Activated CD8-positive, alpha-beta T cell treated with anti-CD3 and anti-CD28 coated beads for 36 hours (primary cell): ENCODE measurements at regions of chr2 and their contacts with region 1.

Region 1: GRCh38 chr2:96856776-96857673 is 791 bp downstream of the ANKRD39 start:
- DNase-seq: peak; percentile 59
- ATAC-seq: no peak
- H3K4me3 Mint-ChIP-seq: peak overlapping the region; percentile 84
- H3K27ac Mint-ChIP-seq: peak overlapping the region; percentile 78
- H3K4me1 Mint-ChIP-seq: peaks cover 29% of the 10 kb centered on the region
- H3K27me3 Mint-ChIP-seq: no peaks in the 10 kb centered on the region
- CTCF ChIP-seq: no peak

Region 2: DNA sequence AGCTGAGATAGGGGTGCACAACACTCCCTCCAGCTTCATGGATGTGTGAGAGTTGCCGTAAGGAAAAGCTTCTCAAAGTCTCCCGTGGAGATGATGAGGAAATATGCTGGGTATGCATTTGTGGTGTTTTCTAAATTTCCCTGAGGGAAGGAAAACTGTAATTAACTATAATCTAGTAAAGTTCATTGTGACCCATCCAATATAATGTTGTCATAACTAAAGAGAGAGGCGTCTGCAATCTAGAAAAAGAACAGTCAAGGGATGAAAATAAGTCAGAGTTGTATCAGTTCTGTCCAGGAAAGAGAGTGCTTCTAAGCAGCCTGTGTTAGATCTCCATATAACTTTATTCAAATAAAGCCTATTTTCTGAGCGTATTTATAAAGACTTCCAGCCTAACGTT is 109.9 kb before region 1 on chr2:
- CTCF ChIA-PET with region 1: no interaction called
- POLR2A ChIA-PET with region 1: no interaction called
- intact Hi-C with region 1: no loop called
- DNase-seq: no peak
- ATAC-seq: no peak
- H3K4me3 Mint-ChIP-seq: no peak overlapping the region
- H3K27ac Mint-ChIP-seq: no peak overlapping the region
- H3K4me1 Mint-ChIP-seq: peaks cover 3% of the 10 kb centered on the region
- H3K27me3 Mint-ChIP-seq: peaks cover 2% of the 10 kb centered on the region
- CTCF ChIP-seq: no peak

Region 3: DNA sequence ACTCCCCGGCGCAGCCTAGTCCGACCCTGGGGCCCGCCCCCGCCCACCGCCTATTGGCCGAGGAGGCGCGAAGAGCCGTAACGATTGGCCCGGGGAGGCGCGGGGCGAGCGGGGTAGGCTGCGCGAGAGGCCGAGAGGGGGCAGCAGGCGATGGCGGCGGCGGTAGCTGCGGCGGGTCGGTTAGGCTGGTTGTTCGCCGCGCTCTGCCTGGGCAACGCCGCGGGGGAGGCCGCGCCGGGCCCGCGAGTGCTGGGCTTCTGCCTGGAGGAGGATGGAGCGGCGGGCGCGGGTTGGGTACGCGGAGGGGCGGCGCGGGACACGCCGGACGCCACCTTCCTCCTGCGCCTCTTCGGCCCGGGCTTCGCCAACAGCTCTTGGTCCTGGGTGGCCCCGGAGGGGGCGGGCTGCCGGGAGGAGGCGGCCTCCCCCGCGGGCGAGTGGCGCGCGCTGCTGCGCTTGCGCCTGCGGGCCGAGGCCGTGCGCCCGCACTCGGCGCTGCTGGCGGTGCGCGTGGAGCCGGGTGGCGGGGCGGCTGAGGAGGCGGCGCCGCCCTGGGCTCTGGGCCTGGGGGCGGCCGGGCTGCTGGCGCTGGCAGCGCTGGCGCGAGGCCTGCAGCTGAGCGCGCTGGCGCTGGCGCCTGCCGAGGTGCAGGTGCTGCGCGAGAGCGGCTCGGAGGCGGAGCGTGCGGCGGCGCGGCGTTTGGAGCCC is 40.7 kb before region 1 on chr2 and contains the start of gene CNNM3:
- CTCF ChIA-PET with region 1: interaction called, 40 read pairs
- POLR2A ChIA-PET with region 1: interaction called, 5 read pairs
- intact Hi-C with region 1: no loop called
- DNase-seq: peak; percentile 96
- ATAC-seq: peak; percentile 95
- H3K4me3 Mint-ChIP-seq: peak within 1 kb of the TSS; percentile 80
- H3K27ac Mint-ChIP-seq: peak within 1 kb of the TSS; percentile 69
- H3K4me1 Mint-ChIP-seq: peaks cover 47% of the 10 kb centered on the region
- H3K27me3 Mint-ChIP-seq: no peaks in the 10 kb centered on the region
- CTCF ChIP-seq: peak; percentile 61
- total RNA-seq, gene CNNM3: 15.8 to 19.3 TPM

Region 4: DNA sequence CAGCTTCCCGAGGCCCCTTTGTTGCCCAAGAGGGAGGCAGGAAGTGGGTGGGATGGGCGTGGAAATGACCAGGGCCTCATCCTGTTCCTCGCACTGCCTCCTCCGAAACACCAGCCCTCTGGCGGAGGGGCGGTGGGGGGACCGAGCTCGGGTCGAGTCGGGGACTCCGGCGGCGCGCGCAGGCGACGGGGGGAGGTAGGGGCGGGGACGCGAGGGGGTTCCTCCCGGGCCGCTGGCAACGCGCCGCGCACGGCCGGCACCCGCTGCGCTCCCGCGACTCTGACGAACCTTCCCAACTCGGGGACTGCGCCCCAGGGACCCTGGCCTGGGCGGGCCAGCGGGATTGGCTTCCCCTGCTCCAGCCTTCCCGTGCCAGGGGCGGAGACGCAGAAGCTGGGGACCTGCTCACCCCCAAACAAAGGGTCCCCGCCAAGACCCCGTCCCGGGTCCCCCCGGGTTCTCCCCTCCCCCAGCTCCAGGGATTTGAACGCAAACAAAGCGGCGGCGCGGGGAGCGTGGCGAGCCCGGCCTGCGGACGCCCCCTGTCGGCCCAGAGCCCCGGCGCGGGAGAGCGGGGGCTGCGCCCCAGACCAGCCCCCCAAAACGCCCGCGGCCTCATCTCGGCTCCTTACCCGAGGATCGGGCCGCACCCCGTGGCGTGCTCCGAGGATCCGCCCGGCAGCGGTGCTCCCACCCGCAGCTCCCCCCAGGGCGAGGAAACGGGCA is 11.7 kb after region 1 on chr2:
- CTCF ChIA-PET with region 1: interaction called, 38 read pairs
- POLR2A ChIA-PET with region 1: interaction called, 30 read pairs
- intact Hi-C with region 1: no loop called
- DNase-seq: peak; percentile 81
- ATAC-seq: peak; percentile 65
- H3K4me3 Mint-ChIP-seq: peak overlapping the region; percentile 78
- H3K27ac Mint-ChIP-seq: peak overlapping the region; percentile 82
- H3K4me1 Mint-ChIP-seq: peaks cover 38% of the 10 kb centered on the region
- H3K27me3 Mint-ChIP-seq: peaks cover 3% of the 10 kb centered on the region
- CTCF ChIP-seq: peak; percentile 62

Region 5: DNA sequence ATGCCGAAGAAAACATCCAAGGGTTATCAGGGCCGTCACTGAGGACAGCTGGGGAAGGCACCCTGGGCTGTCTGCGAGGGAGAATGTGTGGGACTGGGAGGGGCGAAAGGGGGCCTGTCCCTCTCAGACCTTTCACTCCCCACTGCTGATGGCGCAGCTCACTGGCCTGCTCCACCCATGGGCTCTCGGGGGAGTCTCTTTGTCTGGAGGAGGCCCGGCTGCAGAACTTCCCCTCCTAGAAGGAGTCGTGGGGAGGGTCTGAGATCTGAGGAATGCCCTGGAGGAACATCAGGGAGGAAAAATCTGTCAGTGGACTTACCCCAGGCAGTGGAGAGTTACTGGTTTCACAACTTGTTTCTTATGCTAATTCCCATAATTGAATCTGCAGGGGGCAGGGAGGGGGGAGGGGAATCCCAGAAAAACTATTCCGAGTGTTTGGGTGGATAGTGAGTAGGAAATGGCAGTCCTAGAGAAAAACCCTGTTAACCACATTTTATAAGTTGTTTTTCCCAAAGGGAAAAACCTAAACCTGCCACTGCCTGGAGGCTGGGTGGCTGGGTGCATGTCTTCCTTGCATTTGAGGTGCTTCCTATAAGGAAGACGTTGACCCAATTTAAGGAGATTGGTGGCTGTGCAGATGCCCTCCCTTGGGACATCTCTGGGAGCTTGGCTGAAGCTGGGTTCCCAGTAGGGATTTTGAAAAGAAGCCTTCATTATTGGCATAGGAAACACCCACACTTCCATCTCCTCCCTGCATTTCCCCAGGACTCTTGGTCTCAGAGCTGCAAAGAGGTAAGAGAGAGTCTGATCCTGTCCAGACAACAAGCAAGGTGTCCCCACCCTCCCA is 24.5 kb after region 1 on chr2:
- CTCF ChIA-PET with region 1: interaction called, 10 read pairs
- POLR2A ChIA-PET with region 1: no interaction called
- intact Hi-C with region 1: no loop called
- DNase-seq: no peak
- ATAC-seq: no peak
- H3K4me3 Mint-ChIP-seq: no peak overlapping the region
- H3K27ac Mint-ChIP-seq: no peak overlapping the region
- H3K4me1 Mint-ChIP-seq: no peaks in the 10 kb centered on the region
- H3K27me3 Mint-ChIP-seq: no peaks in the 10 kb centered on the region
- CTCF ChIP-seq: no peak

Region 6: DNA sequence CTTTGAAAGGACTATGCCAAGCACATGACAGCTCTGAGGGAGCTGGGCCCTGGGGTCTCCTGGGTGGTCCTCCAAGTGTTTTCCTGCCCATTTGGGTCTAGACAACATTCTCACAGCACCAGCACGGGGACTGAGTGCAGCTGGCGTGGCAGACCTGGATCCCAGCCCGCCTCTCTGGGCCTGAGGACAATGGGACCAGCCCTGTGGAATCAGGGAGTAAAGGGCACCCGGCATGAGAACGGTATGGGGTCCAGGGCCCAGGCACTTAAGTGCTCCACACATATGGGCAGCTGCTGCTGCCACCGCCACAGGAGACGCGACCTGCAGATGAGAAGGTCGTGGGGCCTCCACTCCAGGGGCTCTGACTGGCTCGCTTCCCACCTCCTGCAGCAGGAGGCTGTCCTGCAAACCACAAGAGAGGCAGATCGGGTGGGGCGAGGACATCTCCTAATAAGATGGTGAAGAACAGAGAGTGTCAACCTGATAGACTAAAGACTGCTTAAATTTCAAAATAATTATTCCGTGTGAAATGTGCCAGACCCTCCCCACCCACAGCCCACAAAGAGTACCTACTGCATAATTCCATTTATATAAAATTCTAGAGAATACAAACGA is 83.1 kb after region 1 on chr2:
- CTCF ChIA-PET with region 1: interaction called, 33 read pairs
- POLR2A ChIA-PET with region 1: interaction called, 5 read pairs
- intact Hi-C with region 1: no loop called
- DNase-seq: no peak
- ATAC-seq: no peak
- H3K4me3 Mint-ChIP-seq: no peak overlapping the region
- H3K27ac Mint-ChIP-seq: no peak overlapping the region
- H3K4me1 Mint-ChIP-seq: peaks cover 22% of the 10 kb centered on the region
- H3K27me3 Mint-ChIP-seq: no peaks in the 10 kb centered on the region
- CTCF ChIP-seq: no peak

Region 7: DNA sequence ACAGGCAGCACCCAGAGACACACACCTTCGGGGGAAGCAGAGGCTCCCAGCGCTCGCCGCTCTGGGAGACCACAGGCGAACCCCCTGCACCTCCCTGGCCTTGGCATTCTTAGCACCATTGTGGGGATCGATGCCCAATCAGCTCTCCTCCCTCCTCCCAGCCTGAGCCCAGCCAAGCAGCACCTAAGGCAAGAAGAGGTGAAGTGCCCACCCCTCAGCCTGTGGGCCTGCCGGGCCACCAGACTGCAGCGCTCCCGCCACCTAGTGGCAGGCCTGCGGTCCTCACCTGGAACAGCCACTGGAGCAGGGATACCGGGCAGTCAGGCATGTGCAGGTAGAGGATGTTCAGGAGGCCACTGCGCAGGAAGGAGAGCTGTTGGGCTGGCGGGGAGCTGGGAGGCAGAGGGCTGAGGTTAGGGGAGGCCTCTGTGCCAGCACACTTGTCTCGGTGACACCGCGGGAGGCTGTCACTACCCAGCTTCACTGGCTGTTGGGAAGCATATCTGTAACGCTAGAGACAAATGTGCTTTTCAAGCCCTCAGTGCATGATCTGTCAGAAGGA is 94.1 kb after region 1 on chr2:
- CTCF ChIA-PET with region 1: interaction called, 147 read pairs
- POLR2A ChIA-PET with region 1: interaction called, 9 read pairs
- intact Hi-C with region 1: no loop called
- DNase-seq: peak; percentile 78
- ATAC-seq: peak; percentile 93
- H3K4me3 Mint-ChIP-seq: no peak overlapping the region
- H3K27ac Mint-ChIP-seq: no peak overlapping the region
- H3K4me1 Mint-ChIP-seq: peaks cover 18% of the 10 kb centered on the region
- H3K27me3 Mint-ChIP-seq: no peaks in the 10 kb centered on the region
- CTCF ChIP-seq: peak; percentile 95

Region 8: DNA sequence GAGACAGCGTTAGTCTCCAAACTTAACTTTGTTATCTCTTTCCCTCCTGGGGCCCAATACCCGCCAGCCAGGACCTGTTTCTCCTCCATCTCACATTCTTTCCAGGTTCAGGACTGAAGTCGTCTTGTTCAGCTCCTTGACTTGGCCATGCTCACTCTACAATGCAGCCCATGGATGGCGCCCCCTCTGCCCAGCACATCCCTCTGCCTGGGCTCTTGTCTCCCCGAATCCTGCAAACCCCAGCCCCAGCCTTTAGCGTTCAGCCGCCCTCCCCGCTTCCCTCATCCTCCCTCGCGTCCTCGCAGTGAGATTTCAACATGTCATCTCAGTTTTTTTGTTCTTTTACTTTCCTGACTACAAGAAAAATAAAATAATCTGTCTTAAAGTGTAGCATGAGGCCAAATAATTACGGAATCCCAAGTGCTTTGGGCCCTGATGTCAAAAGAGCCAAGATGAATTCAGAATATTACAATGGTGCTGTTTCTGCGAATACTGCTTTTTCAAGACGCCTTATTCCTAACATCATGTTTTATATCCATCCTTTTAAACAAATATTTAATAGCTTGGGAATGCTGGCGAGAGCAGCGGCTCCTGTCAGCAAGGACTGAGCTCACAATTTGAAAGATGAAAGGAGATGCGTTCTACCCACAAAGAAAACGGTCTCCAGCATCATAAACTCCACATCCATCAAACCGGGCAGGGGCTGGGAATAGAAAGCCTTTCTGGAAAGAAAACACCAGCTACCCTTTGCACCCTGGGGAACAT is 128.3 kb after region 1 on chr2:
- CTCF ChIA-PET with region 1: no interaction called
- POLR2A ChIA-PET with region 1: no interaction called
- intact Hi-C with region 1: no loop called
- DNase-seq: no peak
- ATAC-seq: no peak
- H3K4me3 Mint-ChIP-seq: no peak overlapping the region
- H3K27ac Mint-ChIP-seq: no peak overlapping the region
- H3K4me1 Mint-ChIP-seq: no peaks in the 10 kb centered on the region
- H3K27me3 Mint-ChIP-seq: no peaks in the 10 kb centered on the region
- CTCF ChIP-seq: no peak